Head of caudate nucleus (tissue), 42 donors: ENCODE measurements at regions of chr12 and their contacts with region 1.

Region 1: DNA sequence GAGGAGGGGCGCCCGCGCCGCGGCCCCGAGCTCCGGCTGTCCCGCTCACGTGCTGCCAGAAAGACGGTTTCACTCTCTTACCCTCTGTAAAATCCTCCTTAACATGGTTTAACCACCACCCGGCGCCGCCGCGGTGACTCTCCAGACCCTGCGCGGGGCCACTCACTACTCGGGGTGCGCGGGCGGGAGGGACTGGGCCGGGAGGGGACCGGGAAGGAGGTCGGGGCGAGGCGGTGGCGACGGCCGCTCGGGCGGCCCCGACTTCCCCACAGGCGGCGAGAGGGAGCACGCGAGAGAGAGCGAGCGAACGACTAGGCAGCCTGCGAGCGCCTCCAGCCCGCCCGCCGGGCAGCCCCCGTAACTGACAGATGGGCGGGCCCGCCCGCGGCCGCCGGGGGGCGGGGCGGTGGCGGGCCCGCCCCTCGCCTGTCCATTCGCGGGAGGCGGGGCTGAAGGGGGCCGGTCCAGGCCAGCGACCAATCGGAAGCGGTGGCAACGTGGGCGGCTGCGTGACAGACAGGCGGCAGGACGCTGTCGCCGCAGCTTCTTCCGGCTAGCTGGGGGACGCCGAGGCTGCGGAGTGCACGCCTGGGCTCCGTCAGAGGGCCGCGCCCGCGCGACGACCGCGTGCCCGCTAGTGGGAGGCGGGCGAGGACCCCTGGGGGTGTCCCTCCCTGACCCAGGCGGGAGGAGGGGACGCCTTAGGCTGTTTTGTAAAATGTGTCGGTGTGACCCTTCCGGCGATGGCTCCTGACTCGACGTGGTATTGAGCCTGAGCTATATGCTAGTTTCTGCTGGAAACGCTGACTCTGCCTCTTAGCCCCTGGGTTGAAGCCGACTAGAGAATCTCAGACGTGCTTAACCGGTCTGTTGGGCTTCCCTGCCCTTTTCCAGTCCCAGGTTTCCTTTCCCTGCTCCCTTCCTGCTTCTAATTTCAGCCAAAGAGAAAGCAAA is at the start of gene EEA1:
- DNase-seq: peak; percentile 92 to 99 (median 98)

Region 2: GRCh38 chr12:92478692-92479091 is 450.5 kb before region 1 on chr12:
- intact Hi-C with region 1: no loop called
- DNase-seq: no peak

Region 3: GRCh38 chr12:92759634-92760268 is 169.5 kb before region 1 on chr12:
- intact Hi-C with region 1: no loop called
- DNase-seq: no peak

Region 4: DNA sequence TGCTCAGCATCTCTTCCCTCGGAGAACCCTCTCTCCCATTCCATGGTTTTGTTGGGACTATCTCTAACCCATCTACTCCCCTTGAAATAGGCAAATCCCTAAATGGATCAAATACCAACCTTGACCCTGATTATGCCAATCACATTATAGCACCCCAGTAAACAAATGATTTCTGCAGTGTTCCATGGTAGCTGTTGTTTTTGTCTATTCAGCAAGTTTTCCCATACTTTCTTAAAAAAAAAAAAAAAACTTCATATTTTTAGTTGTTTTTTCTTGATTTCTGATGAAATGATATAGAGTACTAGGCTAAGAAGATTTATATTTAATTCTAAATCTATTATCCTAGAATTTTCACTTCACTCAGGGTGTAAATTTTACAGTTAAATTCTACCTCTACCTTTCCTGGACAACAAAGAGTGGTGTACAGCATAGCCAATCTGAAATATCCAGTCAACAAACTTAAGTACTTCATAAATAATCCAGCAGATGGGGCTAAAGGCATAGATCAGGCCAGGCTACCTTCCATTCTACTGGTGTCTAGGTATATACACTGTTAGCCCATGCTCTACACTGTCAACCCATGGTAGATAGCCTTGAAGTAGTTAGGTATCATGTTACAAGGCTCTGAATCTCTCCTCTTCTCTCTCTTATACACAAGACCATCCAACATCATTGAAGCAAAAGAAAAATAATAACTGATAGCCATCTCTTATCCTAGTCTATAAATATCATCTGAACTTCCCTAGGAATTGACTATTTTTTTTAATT is 144.3 kb before region 1 on chr12:
- intact Hi-C with region 1: loop called (anchors 10 kb)
- DNase-seq: peak in 7 of 42 donors; percentile 6 to 55 (median 13)

Region 5: GRCh38 chr12:93325855-93326254 is 396.6 kb after region 1 on chr12:
- intact Hi-C with region 1: no loop called
- DNase-seq: peak in 5 of 42 donors; percentile 9 to 57 (median 30)

Region 6: GRCh38 chr12:93378373-93379325 is 449.4 kb after region 1 on chr12:
- intact Hi-C with region 1: loop called (anchors 5 kb)
- DNase-seq: peak in 40 of 42 donors; percentile 16 to 72 (median 40)